ENCODE measurements at regions of chr11 and their contacts with region 1.

Region 1: GRCh38 chr11:106473089-106473722 is 395.7 kb downstream of the AASDHPPT start:
- DNase-seq: no peak
- ATAC-seq: no peak
- H3K4me3 ChIP-seq: no peak overlapping the region
- H3K27ac ChIP-seq: no peak overlapping the region
- H3K4me1 ChIP-seq: no peaks in the 10 kb centered on the region
- H3K27me3 ChIP-seq: no peaks in the 10 kb centered on the region
- CTCF ChIP-seq: no peak

Region 2: GRCh38 chr11:106415510-106415909 is 57.7 kb before region 1 on chr11:
- CTCF ChIA-PET with region 1: no interaction called
- POLR2A ChIA-PET with region 1: no interaction called
- in situ Hi-C with region 1: no loop called
- intact Hi-C with region 1: loop called (anchors 10 kb)
- DNase-seq: no peak
- ATAC-seq: no peak
- H3K4me3 ChIP-seq: no peak overlapping the region
- H3K27ac ChIP-seq: no peak overlapping the region
- H3K4me1 ChIP-seq: no peaks in the 10 kb centered on the region
- H3K27me3 ChIP-seq: no peaks in the 10 kb centered on the region
- CTCF ChIP-seq: no peak; the same call in 1 of the 2 replicates

Region 3: DNA sequence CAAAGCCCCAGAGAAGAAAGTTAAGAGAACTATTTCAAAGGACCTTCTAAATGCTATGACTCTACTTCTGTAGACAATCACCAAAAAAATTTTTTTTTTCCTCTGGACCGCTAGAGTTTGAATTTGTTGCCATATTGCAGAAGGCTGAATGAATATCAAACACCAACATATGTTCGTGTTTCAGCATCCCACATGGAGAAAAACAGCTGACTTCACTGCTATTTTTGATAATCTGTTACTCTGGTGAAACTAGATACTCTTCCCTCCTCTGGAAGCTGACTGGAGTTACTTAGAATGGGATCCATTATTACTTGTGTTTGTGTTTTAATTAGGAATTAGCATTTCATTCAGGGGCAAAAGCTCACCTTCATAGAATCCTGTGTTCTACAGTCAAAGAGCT is 51.2 kb after region 1 on chr11:
- CTCF ChIA-PET with region 1: no interaction called
- POLR2A ChIA-PET with region 1: no interaction called
- in situ Hi-C with region 1: no loop called
- intact Hi-C with region 1: no loop called
- DNase-seq: no peak
- ATAC-seq: no peak
- H3K4me3 ChIP-seq: no peak overlapping the region
- H3K27ac ChIP-seq: no peak overlapping the region
- H3K4me1 ChIP-seq: no peaks in the 10 kb centered on the region
- H3K27me3 ChIP-seq: no peaks in the 10 kb centered on the region
- CTCF ChIP-seq: no peak

Measured in Panc1 (cell line).